Sigmoid colon (tissue), 7 donors: ENCODE measurements at regions of chr11 and their contacts with region 1.

Region 1: DNA sequence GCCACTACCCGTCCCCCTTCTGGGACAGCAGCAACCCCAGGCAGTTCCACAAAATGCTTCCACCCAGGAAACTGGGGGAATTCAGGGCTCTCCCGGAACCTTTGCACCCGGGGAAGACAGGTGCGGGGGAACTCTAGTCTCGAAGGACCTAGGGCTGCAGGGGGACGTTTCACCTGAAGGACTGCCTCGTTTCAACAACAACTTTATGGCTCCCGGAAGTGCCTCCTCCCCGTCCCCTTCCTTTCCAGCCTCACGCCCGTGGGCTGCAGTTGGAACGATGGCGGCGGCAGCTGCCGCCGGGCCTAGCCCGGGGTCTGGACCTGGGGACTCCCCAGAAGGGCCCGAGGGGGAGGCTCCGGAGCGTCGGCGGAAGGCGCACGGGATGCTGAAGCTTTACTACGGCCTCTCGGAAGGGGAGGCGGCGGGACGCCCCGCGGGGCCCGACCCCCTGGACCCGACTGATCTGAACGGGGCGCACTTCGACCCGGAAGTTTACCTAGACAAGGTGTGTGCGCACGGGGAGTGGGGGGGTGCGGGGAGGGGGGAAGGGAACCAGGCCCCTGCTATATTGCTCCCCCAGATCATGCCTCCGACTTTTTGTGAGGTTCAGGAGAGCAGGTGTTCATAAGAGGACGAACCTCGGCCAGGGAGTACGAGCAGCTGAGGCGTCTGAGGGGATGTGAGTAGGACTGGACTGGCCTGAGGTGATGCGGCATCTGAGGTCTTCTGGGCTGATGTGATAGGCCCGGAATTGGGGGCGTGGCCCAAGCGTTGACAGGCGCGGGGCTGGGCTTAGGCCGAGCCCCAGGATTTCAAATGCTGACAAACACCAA is at the start of gene VPS51:
- DNase-seq: peak; percentile 95
- H3K4me3 ChIP-seq: peak within 1 kb of the TSS; percentile 84 to 97 (median 91)
- H3K27ac ChIP-seq: peak within 1 kb of the TSS; percentile 90 to 95 (median 93)
- H3K4me1 ChIP-seq: peaks cover 0 to 16% (median 13%) of the 10 kb centered on the region in 4 donors
- H3K27me3 ChIP-seq: no peaks in the 10 kb centered on the region
- CTCF ChIP-seq: no peak
- EP300 ChIP-seq: peak in 2 of 4 donors; percentile 30 to 44
- POLR2A ChIP-seq: peak; percentile 35 to 41
- total RNA-seq, gene VPS51: 211 to 752 (median 281) TPM

Region 2: DNA sequence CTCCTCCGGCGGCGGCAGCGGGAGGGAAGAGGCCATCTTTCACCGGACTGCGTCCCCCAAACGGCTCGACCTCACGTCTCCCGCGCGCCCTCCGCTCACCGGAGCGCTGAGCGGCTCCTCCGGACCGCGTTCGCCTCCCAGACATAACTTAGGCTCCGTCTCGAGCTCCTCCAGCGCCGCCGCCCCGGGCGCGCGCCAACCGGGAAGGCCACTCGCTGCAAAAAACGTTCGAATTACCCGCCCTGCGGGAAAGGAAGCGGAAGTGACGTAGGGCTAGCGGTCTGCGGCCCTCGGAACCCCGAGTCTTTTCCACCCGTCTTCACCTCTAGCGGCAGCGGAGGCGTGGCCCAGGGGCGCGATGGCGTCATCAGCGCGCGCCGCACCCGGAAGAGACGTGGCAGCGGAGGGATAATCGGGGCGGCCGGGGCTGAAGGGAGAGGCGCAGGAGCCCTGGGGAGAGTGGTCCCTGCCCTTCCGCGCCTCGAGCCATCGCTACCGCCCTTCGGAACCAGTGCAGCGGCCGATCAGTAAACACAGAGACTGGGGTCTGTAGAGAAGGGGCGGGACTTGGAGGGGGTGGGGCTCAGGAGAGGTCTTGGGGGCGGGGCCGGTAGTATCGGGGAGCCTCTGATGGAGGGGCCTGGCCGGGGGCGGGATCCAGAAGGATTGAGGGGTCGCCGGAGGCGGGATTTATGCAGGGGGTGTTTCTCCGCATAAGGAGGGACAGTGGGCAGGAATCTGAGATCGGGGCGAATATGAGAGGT is 12.2 kb before region 1 on chr11 and contains the starts of genes CDCA5 and ZFPL1:
- intact Hi-C with region 1: loop called (anchors 1 kb)
- DNase-seq: peak; percentile 97
- H3K4me3 ChIP-seq: peak within 1 kb of the TSS; percentile 78 to 84 (median 82)
- H3K27ac ChIP-seq: peak within 1 kb of the TSS; percentile 88 to 95 (median 92)
- H3K4me1 ChIP-seq: peaks cover 0 to 23% (median 20%) of the 10 kb centered on the region in 4 donors
- H3K27me3 ChIP-seq: no peaks in the 10 kb centered on the region
- CTCF ChIP-seq: no peak
- EP300 ChIP-seq: peak in 2 of 4 donors; percentile 33 to 82
- POLR2A ChIP-seq: peak in 1 of 2 donors; percentile 48
- total RNA-seq, gene CDCA5: 0.33 to 7.5 (median 3.3) TPM in 3 of 4 donors, not detected in the other
- total RNA-seq, gene ZFPL1: 26.1 to 38.8 (median 36.9) TPM

Region 3: GRCh38 chr11:65111744-65112414 is 15.7 kb after region 1 on chr11 and contains the start of gene TM7SF2:
- intact Hi-C with region 1: loop called (anchors 2 kb)
- DNase-seq: peak; percentile 98
- H3K4me3 ChIP-seq: peak within 1 kb of the TSS; percentile 35 to 58 (median 49)
- H3K27ac ChIP-seq: peak within 1 kb of the TSS; percentile 81 to 85 (median 82)
- H3K4me1 ChIP-seq: peaks cover 0 to 55% (median 47%) of the 10 kb centered on the region in 4 donors
- H3K27me3 ChIP-seq: no peaks in the 10 kb centered on the region
- CTCF ChIP-seq: no peak
- EP300 ChIP-seq: no peak
- POLR2A ChIP-seq: peak; percentile 59 to 80
- total RNA-seq, gene TM7SF2: 15.6 to 20.3 (median 17.5) TPM